ENCODE measurements at regions of chr19 and their contacts with region 1.

Region 1: DNA sequence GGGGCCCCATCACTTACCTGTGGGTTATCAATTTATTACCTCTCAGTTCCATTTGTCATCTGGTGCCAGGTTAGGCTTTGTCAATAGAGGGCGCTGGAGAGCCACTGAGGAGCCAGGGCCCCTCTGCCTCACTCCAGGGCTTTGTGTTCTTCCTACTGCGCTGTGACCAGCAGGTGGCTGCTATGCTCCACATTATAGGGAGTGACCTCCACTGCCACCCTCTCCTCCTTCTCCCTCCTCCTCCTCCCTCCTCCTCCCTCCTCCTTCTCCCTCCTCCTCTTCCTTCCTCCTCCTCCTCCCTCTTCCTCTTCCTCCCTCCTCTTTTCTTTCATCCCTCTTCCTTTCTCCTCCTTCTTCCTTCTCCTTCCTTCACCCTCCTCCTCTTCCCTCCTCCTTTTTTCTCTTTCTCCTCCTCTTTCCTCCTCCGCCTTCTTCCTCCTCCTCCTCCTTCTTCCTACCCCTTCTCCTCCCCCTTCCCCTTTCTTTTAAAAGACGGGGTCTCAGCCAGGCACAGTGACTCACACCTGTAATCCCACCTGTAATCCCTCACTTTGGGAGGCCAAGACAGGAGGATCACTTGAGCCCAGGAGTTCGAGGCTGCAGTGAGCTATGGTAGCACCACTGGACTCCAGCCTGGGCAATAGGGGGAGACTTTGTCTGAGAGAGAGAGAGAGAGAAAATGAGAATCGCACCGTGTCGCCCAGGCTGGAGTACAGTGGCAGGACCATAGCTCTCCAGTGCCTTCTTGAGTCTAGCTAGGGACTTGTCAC is 10.3 kb upstream of the ZBTB32 start:
- DNase-seq: peak; percentile 88
- ATAC-seq: peak; percentile 98 to 100

Region 2: GRCh38 chr19:35716801-35717666 is 23.0 kb after region 1 on chr19:
- intact Hi-C with region 1: loop called in 1 of 2 experiments (anchors 2 kb)
- DNase-seq: peak; percentile 97
- ATAC-seq: peak; percentile 94 to 96

Region 3: DNA sequence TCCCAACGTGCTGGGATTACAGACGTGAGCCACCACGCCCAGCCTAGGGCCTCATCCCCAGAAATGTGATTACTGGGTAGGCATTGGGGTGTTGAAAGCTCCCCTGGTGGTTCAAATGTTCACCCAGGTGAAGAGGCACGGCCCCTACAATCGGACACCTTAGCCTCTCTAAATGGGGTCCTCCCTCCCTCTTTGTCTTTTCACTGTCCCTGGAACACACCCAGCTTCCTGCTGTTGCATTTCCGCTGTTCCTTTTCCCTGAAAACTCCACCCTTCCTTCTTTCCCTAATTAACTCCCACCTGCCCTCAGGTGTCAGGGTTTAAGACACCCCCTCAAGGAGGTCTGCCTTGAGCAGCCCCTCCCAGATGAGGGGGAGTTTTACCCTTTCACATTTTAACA is 122.2 kb after region 1 on chr19:
- intact Hi-C with region 1: loop called in 1 of 2 experiments (anchors 5 kb)
- DNase-seq: no peak
- ATAC-seq: no peak